ENCODE measurements at regions of chr1 and their contacts with region 1.

Region 1: DNA sequence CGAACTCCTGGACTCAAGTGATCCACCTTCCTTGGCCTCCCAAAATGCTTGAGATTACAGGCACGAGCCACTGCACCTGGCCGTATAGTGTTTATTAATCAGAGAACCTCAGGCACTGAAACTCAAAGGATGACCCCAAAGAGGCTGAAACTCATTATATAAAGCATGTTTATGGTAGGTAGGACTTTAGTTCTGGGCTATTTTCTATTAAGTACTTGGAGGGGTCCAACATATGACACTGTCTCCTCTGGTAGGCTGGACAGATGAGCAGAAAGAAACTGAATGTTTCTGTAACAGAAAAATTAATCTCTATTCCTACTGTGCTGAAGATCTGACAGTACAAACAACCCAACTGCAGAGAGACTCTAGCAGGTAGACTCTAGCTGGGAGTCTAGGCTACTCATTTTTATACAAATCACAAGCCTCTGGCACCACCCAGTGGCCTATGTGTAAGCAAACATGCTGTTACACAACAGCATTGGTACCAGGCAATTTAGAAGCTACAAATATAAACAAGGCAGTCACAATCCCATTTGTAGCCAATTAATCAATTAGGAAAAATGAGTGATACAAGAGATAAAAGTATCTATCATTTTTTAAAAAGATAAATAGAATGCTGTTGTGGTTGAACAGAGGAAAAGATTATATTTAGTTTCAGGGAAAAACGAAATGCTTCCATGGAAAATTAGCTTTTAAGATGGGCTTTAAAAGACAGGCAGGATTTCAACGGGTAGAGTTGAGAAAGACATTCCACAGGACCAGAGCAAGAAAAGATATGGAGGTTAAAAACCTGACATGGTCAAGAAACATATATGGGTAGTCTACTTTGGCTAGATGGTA is 10.4 kb downstream of the DCAF8 start:
- DNase-seq: peak; percentile 17
- H3K4me3 ChIP-seq: no peak overlapping the region
- H3K27me3 ChIP-seq: no peaks in the 10 kb centered on the region
- CTCF ChIP-seq: peak; percentile 70

Region 2: DNA sequence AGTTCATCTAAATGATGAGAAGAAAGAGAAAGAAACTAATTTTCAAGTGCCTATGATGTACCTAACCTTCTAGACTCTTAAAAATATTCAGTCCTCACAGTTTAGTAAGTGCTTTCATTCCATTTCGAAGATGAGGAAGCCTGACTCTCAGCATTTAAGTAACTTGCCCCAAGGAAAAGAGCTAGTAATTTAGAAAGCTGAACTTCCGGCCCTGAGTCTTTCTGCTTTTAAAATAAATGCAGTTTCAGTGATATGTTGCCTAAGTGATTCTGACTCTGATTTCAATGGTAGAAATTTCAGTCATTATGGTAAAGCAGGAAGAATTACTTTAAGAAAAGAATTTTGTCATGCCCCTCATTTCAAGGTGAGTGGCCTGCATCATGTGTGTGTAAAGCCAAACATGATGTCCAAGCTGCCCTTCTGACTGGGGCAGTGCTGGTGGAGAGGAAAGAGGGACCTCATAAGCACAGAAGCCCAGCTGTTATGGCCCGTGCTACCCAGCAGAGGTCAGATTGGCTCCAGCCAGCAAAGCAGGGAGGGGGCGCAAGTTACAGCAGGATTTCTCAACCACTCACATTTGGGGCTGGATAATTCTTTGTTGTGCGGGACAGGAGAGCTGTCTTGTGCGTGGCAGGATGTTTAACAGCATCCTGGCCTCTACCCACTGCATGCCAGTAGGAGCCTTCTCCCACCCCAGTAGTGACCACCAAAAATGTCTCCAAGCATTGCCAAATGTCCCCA is 89.8 kb before region 1 on chr1:
- CTCF ChIA-PET with region 1: interaction called, 13 read pairs
- POLR2A ChIA-PET with region 1: no interaction called
- DNase-seq: no peak
- H3K4me3 ChIP-seq: no peak overlapping the region
- H3K27me3 ChIP-seq: no peaks in the 10 kb centered on the region; the same call in 1 of the 2 replicates
- CTCF ChIP-seq: peak; percentile 65

Region 3: GRCh38 chr1:160219062-160219929 is 32.6 kb before region 1 on chr1:
- CTCF ChIA-PET with region 1: interaction called, 33 read pairs
- POLR2A ChIA-PET with region 1: no interaction called
- DNase-seq: peak; percentile 50
- H3K4me3 ChIP-seq: no peak overlapping the region
- H3K27me3 ChIP-seq: no peaks in the 10 kb centered on the region
- CTCF ChIP-seq: peak; percentile 74

Region 4: DNA sequence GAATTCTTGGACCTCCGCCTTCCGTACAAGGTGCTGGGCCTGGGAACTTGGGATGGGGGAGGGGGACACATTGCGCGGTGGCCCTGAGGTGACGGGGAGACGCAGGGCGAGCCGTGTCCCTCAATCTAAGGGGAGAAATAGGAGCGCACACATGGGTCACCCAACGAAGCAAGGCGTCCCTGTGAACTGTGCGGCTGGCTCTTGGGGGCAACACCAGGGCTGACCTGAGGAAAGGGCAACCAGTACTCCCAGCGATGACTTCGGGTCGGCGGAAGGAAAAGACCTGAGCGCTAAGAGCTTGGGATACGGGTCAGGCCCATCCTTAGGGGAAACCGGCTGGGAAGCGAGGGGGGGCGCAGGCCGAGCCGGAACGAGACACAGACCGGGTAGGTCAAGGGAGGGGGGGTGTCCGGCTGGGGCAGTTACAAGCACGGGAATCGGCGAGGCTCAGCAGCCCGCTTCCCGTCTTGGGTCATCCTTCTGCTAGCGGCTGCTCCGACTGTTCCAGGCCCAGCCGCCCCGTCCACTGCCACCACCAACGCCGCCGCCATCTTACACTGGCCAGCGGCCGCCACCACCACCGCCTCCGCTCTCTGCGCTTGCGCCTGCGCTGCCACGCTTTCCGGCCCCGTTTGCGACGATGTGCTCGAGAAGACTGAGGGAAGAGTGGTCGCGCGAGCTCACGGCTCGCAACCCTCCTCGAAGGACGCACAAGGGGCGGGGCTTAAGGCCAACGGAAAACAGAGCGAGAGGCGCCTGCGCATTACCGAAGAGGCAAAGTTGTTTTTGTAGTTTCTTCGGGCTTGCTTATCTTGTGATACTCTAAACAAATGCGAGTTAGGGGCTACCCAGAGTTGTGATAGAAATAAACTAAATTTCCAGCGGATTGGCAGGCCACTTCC is 10.2 kb after region 1 on chr1 and contains the start of gene DCAF8:
- CTCF ChIA-PET with region 1: interaction called, 25 read pairs
- POLR2A ChIA-PET with region 1: no interaction called
- DNase-seq: peak; percentile 84
- H3K4me3 ChIP-seq: peak within 1 kb of the TSS; percentile 90
- H3K27me3 ChIP-seq: no peaks in the 10 kb centered on the region
- CTCF ChIP-seq: no peak
- polyA plus RNA-seq, gene DCAF8: 84.0 and 87.3 TPM in 2 replicates

Region 5: DNA sequence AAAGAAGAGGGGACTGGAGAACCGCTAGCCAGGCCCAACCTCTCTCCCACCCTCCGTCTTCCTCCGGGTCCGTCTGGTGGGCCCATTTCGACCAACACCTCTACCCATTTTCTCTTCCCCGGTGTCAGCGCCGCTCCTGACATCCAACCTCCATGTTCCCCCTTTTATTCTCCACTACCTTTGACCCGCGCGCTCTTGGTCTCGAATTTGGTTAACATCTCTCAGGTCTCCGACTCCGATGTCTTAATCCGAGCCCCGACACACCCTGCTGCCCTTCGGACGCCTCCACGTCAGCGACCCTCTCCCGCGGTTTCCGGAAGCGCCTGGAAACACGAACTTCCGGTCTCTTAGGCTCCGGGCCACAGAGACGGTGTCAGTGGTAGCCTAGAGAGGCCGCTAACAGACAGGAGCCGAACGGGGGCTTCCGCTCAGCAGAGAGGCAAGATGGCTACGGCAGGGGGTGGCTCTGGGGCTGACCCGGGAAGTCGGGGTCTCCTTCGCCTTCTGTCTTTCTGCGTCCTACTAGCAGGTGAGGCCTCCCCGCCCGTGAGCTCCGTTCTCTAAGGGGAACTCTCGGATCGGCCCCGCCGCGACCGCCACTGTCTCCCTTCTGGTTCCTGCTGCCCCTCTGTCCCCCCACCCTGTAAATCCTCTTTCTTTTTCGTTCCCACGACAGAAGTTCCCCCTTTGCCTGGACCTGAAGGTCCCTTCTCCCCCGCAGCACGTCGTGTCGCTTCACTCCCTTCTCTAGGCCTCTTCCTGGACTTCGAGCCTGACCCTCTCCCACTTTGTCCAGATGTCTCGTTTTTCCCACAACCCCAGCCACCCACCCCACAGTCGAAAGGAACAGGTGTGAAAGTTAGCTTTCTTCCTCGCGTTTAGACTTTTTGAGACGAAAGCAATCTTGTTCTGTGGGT is 91.3 kb after region 1 on chr1 and contains the starts of genes COPA and NCSTN:
- CTCF ChIA-PET with region 1: no interaction called
- POLR2A ChIA-PET with region 1: no interaction called
- DNase-seq: peak; percentile 72
- H3K4me3 ChIP-seq: peak within 1 kb of the TSS; percentile 89
- H3K27me3 ChIP-seq: no peaks in the 10 kb centered on the region
- CTCF ChIP-seq: 0 out of 2 replicates have a peak, but pooled peaks have one; percentile 5
- polyA plus RNA-seq, gene COPA: 267 and 304 TPM in 2 replicates
- polyA plus RNA-seq, gene NCSTN: 214 and 260 TPM in 2 replicates

Region 6: DNA sequence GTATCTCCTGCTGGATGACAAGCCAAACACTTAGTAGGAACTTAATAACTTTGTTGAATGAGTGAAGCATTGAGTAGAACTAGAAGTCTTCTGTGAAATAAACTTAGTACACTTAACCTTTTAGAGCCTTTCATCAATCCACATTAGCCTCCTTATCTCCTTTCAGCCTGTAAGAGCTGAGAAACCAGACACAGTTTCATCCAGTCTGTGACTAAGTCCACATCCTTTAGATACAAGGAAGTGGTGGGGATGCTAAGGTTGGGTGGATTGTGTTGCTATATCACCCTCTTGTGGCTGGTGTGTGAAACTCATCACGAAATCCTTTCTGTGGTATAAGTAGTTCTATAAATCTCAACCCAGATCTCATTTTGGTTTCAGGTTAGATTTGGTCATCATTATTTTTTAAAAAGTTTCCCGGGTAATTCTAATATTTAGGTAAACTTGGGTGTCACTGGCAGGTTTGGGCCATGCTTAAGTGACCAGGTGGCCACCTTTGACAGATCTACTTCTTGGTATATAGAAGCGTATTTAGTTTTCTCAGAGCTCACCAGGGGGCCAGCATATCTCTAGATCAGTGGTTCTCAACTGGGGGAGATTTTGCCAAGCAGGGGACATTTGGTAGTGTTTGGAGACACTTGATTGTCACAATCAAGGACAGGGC is 355.2 kb after region 1 on chr1:
- CTCF ChIA-PET with region 1: no interaction called
- POLR2A ChIA-PET with region 1: no interaction called
- DNase-seq: peak; percentile 4
- H3K4me3 ChIP-seq: no peak overlapping the region
- H3K27me3 ChIP-seq: peaks cover 2% of the 10 kb centered on the region; the same call in 1 of the 2 replicates
- CTCF ChIP-seq: peak; percentile 73

Measured in BJ (cell line).